PC-3 (cell line): ENCODE measurements at regions of chr20 and their contacts with region 1.

Region 1: DNA sequence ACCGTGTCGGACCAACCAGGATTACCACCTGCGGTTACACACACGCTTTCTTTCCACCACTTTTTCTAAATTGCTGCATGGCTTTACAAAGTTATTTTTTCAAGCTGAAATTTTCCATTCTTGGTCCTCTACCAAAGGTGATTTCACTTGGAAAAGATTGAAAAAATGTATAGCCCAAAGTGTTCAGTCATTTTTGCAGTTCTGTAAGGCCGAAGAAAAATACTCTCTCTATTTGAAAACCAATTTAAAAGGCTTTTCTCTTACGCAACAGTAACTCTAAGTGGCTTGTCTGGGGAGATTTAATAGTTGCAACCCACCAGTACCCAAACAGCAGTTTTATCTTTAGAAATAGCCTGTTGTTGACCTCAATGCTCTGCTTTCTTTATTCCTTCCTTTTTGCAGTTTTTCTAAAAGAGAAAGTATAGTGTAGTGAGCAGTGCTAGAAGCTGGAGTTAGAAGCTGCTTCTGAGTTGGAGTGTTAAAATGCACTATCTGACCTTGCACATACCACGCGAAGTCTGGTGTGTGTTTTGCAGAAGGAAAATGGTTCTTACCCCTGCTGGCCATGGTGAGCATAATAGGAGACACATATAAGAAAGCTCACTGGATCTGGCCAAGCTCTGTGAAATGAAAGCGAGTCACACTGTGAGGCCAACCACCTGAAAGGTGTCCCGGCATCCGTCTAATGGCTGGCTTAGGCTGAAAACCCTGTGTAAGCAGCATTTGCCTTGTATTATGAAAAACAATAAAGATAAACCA is 271.6 kb upstream of the PRND start:
- DNase-seq: peak; percentile 58
- ATAC-seq: peak; percentile 64; the same call in 1 of the 2 replicates
- H3K4me3 ChIP-seq: no peak overlapping the region
- H3K27ac ChIP-seq: no peak overlapping the region
- H3K4me1 ChIP-seq: peaks cover 12% of the 10 kb centered on the region
- H3K27me3 ChIP-seq: no peaks in the 10 kb centered on the region
- CTCF ChIP-seq: peak; percentile 43

Region 2: GRCh38 chr20:4256874-4257273 is 193.3 kb before region 1 on chr20:
- CTCF ChIA-PET with region 1: no interaction called
- POLR2A ChIA-PET with region 1: no interaction called
- intact Hi-C with region 1: loop called (anchors 10 kb)
- DNase-seq: no peak
- ATAC-seq: no peak
- H3K4me3 ChIP-seq: no peak overlapping the region
- H3K27ac ChIP-seq: no peak overlapping the region
- H3K4me1 ChIP-seq: no peaks in the 10 kb centered on the region
- H3K27me3 ChIP-seq: no peaks in the 10 kb centered on the region
- CTCF ChIP-seq: no peak

Region 3: GRCh38 chr20:4326195-4327065 is 123.7 kb before region 1 on chr20:
- CTCF ChIA-PET with region 1: no interaction called
- POLR2A ChIA-PET with region 1: no interaction called
- intact Hi-C with region 1: no loop called
- DNase-seq: peak; percentile 62
- ATAC-seq: no peak
- H3K4me3 ChIP-seq: no peak overlapping the region
- H3K27ac ChIP-seq: no peak overlapping the region
- H3K4me1 ChIP-seq: peaks cover 10% of the 10 kb centered on the region; the same call in 1 of the 2 replicates
- H3K27me3 ChIP-seq: no peaks in the 10 kb centered on the region
- CTCF ChIP-seq: no peak

Region 4: DNA sequence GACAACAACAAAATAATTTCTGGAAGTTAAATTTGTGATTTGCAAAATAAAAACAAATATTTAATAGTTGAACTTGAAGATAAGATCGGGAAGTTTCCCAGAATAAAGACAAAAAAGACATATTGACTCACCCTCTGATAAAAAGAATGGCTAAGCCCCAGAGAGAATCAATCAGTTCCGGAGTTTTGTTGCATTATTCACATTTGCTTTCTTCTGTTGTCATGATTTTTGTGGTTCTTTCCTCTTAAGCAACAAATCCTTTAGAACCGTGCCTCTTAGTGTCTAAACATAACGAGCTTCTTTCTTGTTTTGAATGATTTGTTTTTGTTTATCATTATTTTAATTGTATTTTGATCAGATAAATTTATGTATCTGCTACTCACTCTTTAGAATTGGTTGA is 66.2 kb before region 1 on chr20:
- CTCF ChIA-PET with region 1: no interaction called
- POLR2A ChIA-PET with region 1: no interaction called
- intact Hi-C with region 1: loop called (anchors 5 kb)
- DNase-seq: peak; percentile 61
- ATAC-seq: peak; percentile 46
- H3K4me3 ChIP-seq: no peak overlapping the region
- H3K27ac ChIP-seq: no peak overlapping the region
- H3K4me1 ChIP-seq: peaks cover 5% of the 10 kb centered on the region; the same call in 1 of the 2 replicates
- H3K27me3 ChIP-seq: no peaks in the 10 kb centered on the region
- CTCF ChIP-seq: no peak

Region 5: GRCh38 chr20:4465855-4466545 is 15.9 kb after region 1 on chr20:
- CTCF ChIA-PET with region 1: no interaction called
- POLR2A ChIA-PET with region 1: no interaction called
- intact Hi-C with region 1: no loop called
- DNase-seq: no peak
- ATAC-seq: no peak
- H3K4me3 ChIP-seq: no peak overlapping the region
- H3K27ac ChIP-seq: no peak overlapping the region
- H3K4me1 ChIP-seq: peaks cover 20% of the 10 kb centered on the region
- H3K27me3 ChIP-seq: no peaks in the 10 kb centered on the region
- CTCF ChIP-seq: no peak

Region 6: DNA sequence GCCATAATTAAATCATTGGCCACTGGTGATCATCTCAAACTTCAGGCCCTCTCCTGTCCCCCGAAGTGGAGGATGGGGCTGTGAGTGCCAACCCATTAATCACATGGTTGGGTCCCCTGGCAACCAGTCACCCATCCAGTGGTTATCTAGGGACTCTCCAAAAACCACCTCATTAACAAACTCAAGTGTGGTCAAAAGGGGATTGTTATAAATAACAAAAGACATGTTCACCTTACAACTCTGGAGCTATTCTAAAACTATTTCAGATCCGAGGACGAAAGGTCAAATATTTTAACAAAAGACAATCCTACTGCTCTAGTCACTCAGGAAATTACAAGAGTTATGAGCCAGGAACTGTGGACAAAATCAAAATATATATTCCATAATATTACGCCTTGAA is 176.1 kb after region 1 on chr20:
- CTCF ChIA-PET with region 1: no interaction called
- POLR2A ChIA-PET with region 1: no interaction called
- intact Hi-C with region 1: no loop called
- DNase-seq: no peak
- ATAC-seq: no peak
- H3K4me3 ChIP-seq: no peak overlapping the region
- H3K27ac ChIP-seq: no peak overlapping the region
- H3K4me1 ChIP-seq: no peaks in the 10 kb centered on the region
- H3K27me3 ChIP-seq: no peaks in the 10 kb centered on the region
- CTCF ChIP-seq: no peak

Region 7: GRCh38 chr20:4787069-4787468 is 336.9 kb after region 1 on chr20:
- CTCF ChIA-PET with region 1: no interaction called
- POLR2A ChIA-PET with region 1: no interaction called
- intact Hi-C with region 1: no loop called
- DNase-seq: no peak
- ATAC-seq: no peak
- H3K4me3 ChIP-seq: no peak overlapping the region
- H3K27ac ChIP-seq: no peak overlapping the region
- H3K4me1 ChIP-seq: no peaks in the 10 kb centered on the region
- H3K27me3 ChIP-seq: no peaks in the 10 kb centered on the region
- CTCF ChIP-seq: no peak